Spleen (tissue), 13 donors: ENCODE measurements at regions of chr9 and their contacts with region 1.

Region 1: DNA sequence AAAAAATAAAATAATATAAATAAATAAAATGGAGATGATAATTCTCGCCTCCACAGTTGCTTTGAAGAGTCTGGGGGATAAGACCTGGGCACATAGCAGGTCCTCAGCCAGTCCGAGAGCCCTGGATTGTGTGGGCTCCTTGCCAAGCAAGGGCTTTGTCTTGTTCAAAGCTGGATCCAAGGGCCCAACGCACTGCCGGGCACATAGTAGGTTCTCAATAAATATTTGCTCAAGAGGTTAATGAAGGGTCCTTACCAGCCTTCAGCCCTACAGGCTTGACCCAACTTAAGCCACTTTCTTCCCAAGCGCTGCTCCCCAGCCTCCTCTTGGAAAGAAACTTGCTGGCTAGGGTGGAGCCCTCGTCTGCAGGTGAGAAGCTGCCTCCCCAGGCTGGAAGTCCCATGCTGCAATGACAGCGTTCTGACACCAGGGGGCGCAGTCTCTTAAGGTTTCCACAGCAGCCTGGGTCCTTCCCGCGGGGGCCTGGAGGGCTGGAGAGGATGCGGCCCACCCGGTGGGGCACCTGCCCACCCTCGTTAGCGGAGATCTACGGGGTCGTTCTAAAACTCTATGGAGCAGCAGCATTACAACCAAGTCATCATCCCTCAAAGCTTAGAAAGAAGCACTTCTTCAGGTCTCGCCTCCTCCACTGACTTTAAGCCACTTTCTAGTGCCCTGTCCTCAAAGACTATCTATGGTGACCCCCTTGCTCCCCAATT is 115.2 kb downstream of the LHX2 start:
- DNase-seq: peak; percentile 93
- H3K4me3 ChIP-seq: no peak overlapping the region
- H3K27ac ChIP-seq: no peak overlapping the region
- H3K4me1 ChIP-seq: peaks cover 0 to 8% (median 5%) of the 10 kb centered on the region in 6 donors
- H3K27me3 ChIP-seq: no peaks in the 10 kb centered on the region
- CTCF ChIP-seq: peak; percentile 89 to 100 (median 99)
- POLR2A ChIP-seq: no peak

Region 2: GRCh38 chr9:124315882-124316281 is 189.2 kb after region 1 on chr9:
- intact Hi-C with region 1: loop called (anchors 5 kb)
- DNase-seq: no peak
- H3K4me3 ChIP-seq: no peak overlapping the region
- H3K27ac ChIP-seq: no peak overlapping the region
- H3K4me1 ChIP-seq: peaks cover 0 to 32% (median 10%) of the 10 kb centered on the region in 6 donors
- H3K27me3 ChIP-seq: no peaks in the 10 kb centered on the region
- CTCF ChIP-seq: no peak
- POLR2A ChIP-seq: no peak

Region 3: GRCh38 chr9:124392871-124393460 is 266.2 kb after region 1 on chr9:
- intact Hi-C with region 1: loop called (anchors 5 kb)
- DNase-seq: no peak
- H3K4me3 ChIP-seq: no peak overlapping the region
- H3K27ac ChIP-seq: peak overlapping the region in 6 of 8 donors; percentile 20 to 71 (median 54)
- H3K4me1 ChIP-seq: peaks cover 0 to 99% (median 53%) of the 10 kb centered on the region in 6 donors
- H3K27me3 ChIP-seq: no peaks in the 10 kb centered on the region
- CTCF ChIP-seq: no peak
- POLR2A ChIP-seq: no peak